A673 (cell line): ENCODE measurements at regions of chr4 and their contacts with region 1.

Region 1: DNA sequence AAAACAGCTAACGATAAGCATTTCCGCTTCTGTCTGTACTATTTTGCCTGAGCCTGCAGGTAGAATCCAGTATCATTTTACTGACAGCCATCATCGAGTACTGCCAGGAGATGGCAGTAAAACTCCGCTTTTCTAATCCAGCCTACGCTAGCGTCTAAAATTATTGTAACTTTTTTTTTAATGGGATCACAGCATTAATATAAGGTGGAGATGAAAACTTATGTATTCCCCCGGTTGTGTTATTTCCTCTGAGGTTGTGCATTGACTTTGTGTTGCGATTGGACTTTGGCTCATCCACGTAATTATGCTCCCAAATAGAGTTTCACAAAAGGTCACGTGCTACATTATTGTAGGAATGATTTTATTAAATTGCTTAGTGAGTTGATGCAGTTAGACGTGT is 248.1 kb downstream of the C4orf33 start:
- DNase-seq: peak; percentile 59
- H3K4me3 ChIP-seq: no peak overlapping the region
- H3K27ac ChIP-seq: no peak overlapping the region
- H3K4me1 ChIP-seq: peaks cover 13% of the 10 kb centered on the region
- H3K27me3 ChIP-seq: no peaks in the 10 kb centered on the region
- CTCF ChIP-seq: peak; percentile 79

Region 2: GRCh38 chr4:128191115-128191781 is 1152.8 kb before region 1 on chr4:
- CTCF ChIA-PET with region 1: no interaction called
- POLR2A ChIA-PET with region 1: no interaction called
- intact Hi-C with region 1: loop called (anchors 5 kb)
- DNase-seq: peak; percentile 79
- H3K4me3 ChIP-seq: no peak overlapping the region
- H3K27ac ChIP-seq: no peak overlapping the region
- H3K4me1 ChIP-seq: no peaks in the 10 kb centered on the region
- H3K27me3 ChIP-seq: no peaks in the 10 kb centered on the region
- CTCF ChIP-seq: peak; percentile 96

Region 3: GRCh38 chr4:129218360-129218759 is 125.7 kb before region 1 on chr4:
- CTCF ChIA-PET with region 1: no interaction called
- POLR2A ChIA-PET with region 1: no interaction called
- intact Hi-C with region 1: loop called (anchors 5 kb)
- DNase-seq: peak; percentile 26
- H3K4me3 ChIP-seq: no peak overlapping the region
- H3K27ac ChIP-seq: no peak overlapping the region
- H3K4me1 ChIP-seq: no peaks in the 10 kb centered on the region
- H3K27me3 ChIP-seq: no peaks in the 10 kb centered on the region
- CTCF ChIP-seq: peak; percentile 36

Region 4: DNA sequence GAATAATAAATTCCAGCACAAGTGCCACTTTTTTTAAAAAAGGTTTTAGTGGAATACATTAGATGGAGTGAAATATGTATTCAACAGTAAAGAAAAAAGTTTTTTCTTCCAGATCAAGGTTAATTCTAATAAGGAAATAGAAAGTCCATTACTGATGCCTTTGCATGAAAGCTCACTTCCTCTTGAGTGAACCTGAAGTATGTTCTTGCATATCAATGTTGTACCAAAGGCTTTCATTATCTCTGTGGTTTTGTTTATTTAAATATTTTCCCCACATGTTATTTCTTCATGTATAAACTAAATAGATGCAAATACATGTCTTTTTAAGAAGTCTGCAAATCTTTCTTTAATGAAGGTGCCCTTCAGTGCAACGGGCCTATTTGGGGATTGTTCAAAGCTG is 59.8 kb after region 1 on chr4:
- CTCF ChIA-PET with region 1: no interaction called
- POLR2A ChIA-PET with region 1: no interaction called
- intact Hi-C with region 1: no loop called
- DNase-seq: no peak
- H3K4me3 ChIP-seq: no peak overlapping the region
- H3K27ac ChIP-seq: no peak overlapping the region
- H3K4me1 ChIP-seq: no peaks in the 10 kb centered on the region
- H3K27me3 ChIP-seq: no peaks in the 10 kb centered on the region
- CTCF ChIP-seq: no peak

Region 5: GRCh38 chr4:130747842-130748241 is 1403.8 kb after region 1 on chr4:
- CTCF ChIA-PET with region 1: no interaction called
- POLR2A ChIA-PET with region 1: no interaction called
- intact Hi-C with region 1: loop called (anchors 10 kb)
- DNase-seq: peak; percentile 29
- H3K4me3 ChIP-seq: no peak overlapping the region
- H3K27ac ChIP-seq: no peak overlapping the region
- H3K4me1 ChIP-seq: no peaks in the 10 kb centered on the region
- H3K27me3 ChIP-seq: no peaks in the 10 kb centered on the region
- CTCF ChIP-seq: peak; percentile 61